ENCODE measurements at regions of chr1 and their contacts with region 1.

Region 1: DNA sequence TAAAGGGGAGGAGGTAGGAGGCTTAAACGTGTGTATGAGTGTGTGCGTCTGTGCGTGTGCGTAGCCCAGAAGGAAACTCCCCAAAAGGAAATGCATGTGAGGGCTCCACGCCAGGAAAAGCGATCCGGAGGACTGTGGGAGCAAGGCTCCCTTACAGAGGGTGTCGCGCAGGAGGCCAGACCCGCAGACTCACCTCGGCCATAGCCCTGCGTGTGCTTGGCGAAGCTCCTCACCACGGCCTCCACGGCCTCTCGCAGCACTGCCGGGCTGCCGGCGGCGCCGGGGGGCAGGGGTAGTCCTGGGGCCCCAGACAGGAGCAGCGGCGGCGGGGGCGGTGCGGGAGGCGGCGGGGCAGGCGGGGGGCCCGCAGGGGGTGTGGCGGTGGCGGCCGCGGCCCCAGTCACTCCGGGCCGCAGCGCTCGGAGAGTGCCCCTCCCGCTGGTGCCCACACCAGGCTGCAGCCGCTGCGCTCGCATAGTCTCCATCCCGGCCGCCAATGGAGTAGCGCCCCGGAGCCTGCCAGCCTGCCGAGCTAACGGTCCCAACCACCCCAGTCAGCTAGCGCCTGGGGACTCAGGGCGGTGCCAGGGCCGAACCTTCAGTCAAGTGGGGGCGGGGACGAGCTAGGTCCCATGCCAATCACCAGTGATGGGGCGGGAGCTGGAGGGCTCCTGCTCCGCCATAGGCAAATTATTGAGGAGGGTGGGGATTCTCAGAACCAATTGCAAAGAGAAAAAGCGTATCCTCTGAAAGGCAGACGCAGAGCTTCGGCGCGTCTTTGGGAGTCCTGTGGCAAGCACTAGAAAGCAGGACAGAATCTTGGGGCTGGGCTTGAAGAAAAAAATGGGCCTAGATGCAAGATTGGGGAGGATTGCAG is at the start of gene LIX1L:
- DNase-seq: peak; percentile 79 to 97 (median 94)
- ATAC-seq: peak; percentile 95
- H3K4me3 ChIP-seq: peak within 1 kb of the TSS; percentile 70
- H3K4me3 Mint-ChIP-seq: peak within 1 kb of the TSS; percentile 88 to 99 (median 98)
- H3K27ac ChIP-seq: peak within 1 kb of the TSS; percentile 94
- H3K27ac Mint-ChIP-seq: peak within 1 kb of the TSS; percentile 87 to 98 (median 92)
- H3K4me1 ChIP-seq: peaks cover 35 to 57% of the 10 kb centered on the region in 2 donors
- H3K4me1 Mint-ChIP-seq: peaks cover 59 to 70% (median 66%) of the 10 kb centered on the region in 7 donors
- H3K27me3 ChIP-seq: no peaks in the 10 kb centered on the region
- H3K27me3 Mint-ChIP-seq: peaks cover 0 to 4% (median 0%) of the 10 kb centered on the region in 5 donors
- total RNA-seq, gene LIX1L: 31.6 to 59.2 (median 47.6) TPM

Region 2: DNA sequence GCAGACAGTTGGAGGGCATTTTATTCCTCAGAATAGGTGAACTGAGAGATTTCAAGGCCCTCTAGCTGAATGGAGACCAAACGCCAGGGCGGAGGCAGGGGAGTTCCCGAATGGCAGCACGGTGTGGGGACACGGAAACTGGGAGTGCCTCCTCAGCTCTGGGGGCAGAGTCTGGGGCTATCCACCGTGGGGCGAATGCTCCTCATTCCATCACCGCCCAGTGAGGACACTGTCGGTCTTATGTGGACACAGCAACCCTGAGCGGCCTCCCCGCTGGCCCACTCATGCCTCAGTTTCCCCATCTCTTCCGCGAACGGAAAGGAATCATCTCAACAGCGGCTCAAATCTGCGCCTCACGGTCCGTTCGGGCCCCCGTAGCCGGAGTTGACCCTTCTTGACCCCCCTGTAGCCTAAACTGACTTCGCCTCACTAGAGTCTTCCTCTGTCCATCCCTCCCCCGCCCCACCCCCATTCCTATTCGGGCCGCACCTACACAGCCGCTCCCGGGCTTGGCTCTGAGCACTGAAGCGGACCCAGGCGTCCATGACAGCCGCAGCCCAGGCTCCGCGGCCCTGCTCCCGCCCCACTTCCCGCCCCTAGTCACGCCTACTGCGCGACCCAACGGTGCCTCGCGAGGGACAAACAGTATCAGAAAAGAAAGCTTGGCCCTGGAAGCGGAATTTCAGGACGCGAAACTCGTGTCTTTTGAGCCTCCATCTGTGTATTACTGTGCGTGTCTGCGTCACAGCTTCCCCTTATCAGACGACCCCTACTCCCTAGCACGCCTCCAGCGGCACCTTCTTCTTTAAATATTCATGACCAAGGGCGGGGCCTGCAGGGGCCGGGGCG is 39.3 kb before region 1 on chr1 and contains the start of gene PEX11B:
- CTCF ChIA-PET with region 1: no interaction called
- POLR2A ChIA-PET with region 1: interaction called, 50 read pairs
- intact Hi-C with region 1: loop called in 1 of 2 experiments (anchors 1 kb)
- DNase-seq: peak; percentile 80 to 95 (median 93)
- ATAC-seq: peak; percentile 94
- H3K4me3 ChIP-seq: peak within 1 kb of the TSS; percentile 82
- H3K4me3 Mint-ChIP-seq: peak within 1 kb of the TSS; percentile 92 to 98 (median 96)
- H3K27ac ChIP-seq: peak within 1 kb of the TSS; percentile 83
- H3K27ac Mint-ChIP-seq: peak within 1 kb of the TSS; percentile 93 to 98 (median 96)
- H3K4me1 ChIP-seq: peaks cover 21 to 23% of the 10 kb centered on the region in 2 donors
- H3K4me1 Mint-ChIP-seq: peaks cover 27 to 75% (median 61%) of the 10 kb centered on the region in 7 donors
- H3K27me3 ChIP-seq: no peaks in the 10 kb centered on the region
- H3K27me3 Mint-ChIP-seq: no peaks in the 10 kb centered on the region
- total RNA-seq, gene PEX11B: 16.4 to 40.4 (median 37.7) TPM

Region 3: GRCh38 chr1:145936247-145936646 is 21.4 kb before region 1 on chr1:
- CTCF ChIA-PET with region 1: interaction called, 8 read pairs
- POLR2A ChIA-PET with region 1: interaction called, 26 read pairs
- intact Hi-C with region 1: loop called in 1 of 2 experiments (anchors 1 kb)
- DNase-seq: no peak
- ATAC-seq: no peak
- H3K4me3 ChIP-seq: no peak overlapping the region
- H3K4me3 Mint-ChIP-seq: no peak overlapping the region
- H3K27ac ChIP-seq: no peak overlapping the region
- H3K27ac Mint-ChIP-seq: peak overlapping the region in 5 of 9 donors; percentile 2 to 62 (median 54)
- H3K4me1 ChIP-seq: peaks cover 6 to 16% of the 10 kb centered on the region in 2 donors
- H3K4me1 Mint-ChIP-seq: peaks cover 14 to 27% (median 24%) of the 10 kb centered on the region in 7 donors
- H3K27me3 ChIP-seq: no peaks in the 10 kb centered on the region
- H3K27me3 Mint-ChIP-seq: no peaks in the 10 kb centered on the region

Region 4: GRCh38 chr1:145996433-145997015 is 38.8 kb after region 1 on chr1 and contains the start of gene TXNIP:
- CTCF ChIA-PET with region 1: no interaction called
- POLR2A ChIA-PET with region 1: interaction called, 164 read pairs
- intact Hi-C with region 1: loop called (anchors 1 to 5 kb)
- DNase-seq: peak; percentile 66 to 97 (median 94)
- ATAC-seq: peak; percentile 92
- H3K4me3 ChIP-seq: peak within 1 kb of the TSS; percentile 97
- H3K4me3 Mint-ChIP-seq: peak within 1 kb of the TSS; percentile 89 to 99 (median 98)
- H3K27ac ChIP-seq: peak within 1 kb of the TSS; percentile 91
- H3K27ac Mint-ChIP-seq: peak within 1 kb of the TSS; percentile 94 to 99 (median 97)
- H3K4me1 ChIP-seq: peaks cover 41 to 48% of the 10 kb centered on the region in 2 donors
- H3K4me1 Mint-ChIP-seq: peaks cover 43 to 72% (median 54%) of the 10 kb centered on the region in 7 donors
- H3K27me3 ChIP-seq: no peaks in the 10 kb centered on the region
- H3K27me3 Mint-ChIP-seq: peaks cover 0 to 3% (median 0%) of the 10 kb centered on the region in 5 donors
- total RNA-seq, gene TXNIP: 498 to 1,101 (median 659) TPM

Region 5: DNA sequence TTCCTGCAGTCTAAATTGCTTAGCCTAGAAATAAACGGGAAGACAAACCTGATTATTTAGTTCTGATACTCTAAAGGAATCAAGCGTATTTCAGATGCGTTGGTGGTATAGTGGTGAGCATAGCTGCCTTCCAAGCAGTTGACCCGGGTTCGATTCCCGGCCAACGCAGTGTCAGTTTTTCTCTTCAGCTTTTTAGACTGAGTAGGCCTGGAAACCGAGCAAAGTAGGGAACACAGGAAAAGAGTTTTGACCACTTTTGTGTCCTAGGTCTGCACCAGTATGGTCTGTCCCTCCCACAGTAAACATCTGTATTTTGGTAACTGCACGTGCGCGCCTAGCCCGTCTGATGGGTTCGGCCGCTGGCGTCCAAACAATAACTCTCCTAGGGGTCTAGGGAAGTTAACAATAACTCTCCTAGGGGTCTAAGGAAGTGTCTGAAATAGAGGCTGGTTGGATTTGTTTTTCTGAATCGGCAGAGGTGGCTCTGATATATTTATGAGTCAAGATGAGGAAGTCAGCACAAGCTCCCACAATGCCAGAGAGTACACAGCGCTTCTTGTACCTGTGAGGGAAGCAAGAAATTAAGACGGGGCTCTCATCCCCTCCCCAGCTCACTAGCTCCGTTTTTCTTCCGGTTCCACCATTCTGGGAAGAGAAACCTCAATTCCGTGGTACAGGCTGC is 79.4 kb after region 1 on chr1:
- CTCF ChIA-PET with region 1: interaction called, 4 read pairs
- POLR2A ChIA-PET with region 1: interaction called, 27 read pairs
- intact Hi-C with region 1: no loop called
- DNase-seq: peak; percentile 52 to 88 (median 83)
- ATAC-seq: peak; percentile 66
- H3K4me3 ChIP-seq: peak overlapping the region; percentile 87
- H3K4me3 Mint-ChIP-seq: peak overlapping the region; percentile 95 to 99 (median 97)
- H3K27ac ChIP-seq: peak overlapping the region; percentile 69
- H3K27ac Mint-ChIP-seq: peak overlapping the region; percentile 93 to 100 (median 98)
- H3K4me1 ChIP-seq: peaks cover 0 to 6% of the 10 kb centered on the region in 2 donors
- H3K4me1 Mint-ChIP-seq: peaks cover 7 to 49% (median 39%) of the 10 kb centered on the region in 7 donors
- H3K27me3 ChIP-seq: no peaks in the 10 kb centered on the region
- H3K27me3 Mint-ChIP-seq: peaks cover 0 to 32% (median 0%) of the 10 kb centered on the region in 5 donors